ENCODE measurements at regions of chr2 and their contacts with region 1.

Region 1: GRCh38 chr2:100640431-100641124 is 77.8 kb downstream of the PDCL3 start:
- DNase-seq: no peak
- ATAC-seq: no peak
- H3K4me3 ChIP-seq: no peak overlapping the region
- H3K4me3 Mint-ChIP-seq: peak overlapping the region in 1 of 10 donors; percentile 1
- H3K27ac ChIP-seq: no peak overlapping the region
- H3K27ac Mint-ChIP-seq: peak overlapping the region in 2 of 9 donors; percentile 43 to 65
- H3K4me1 ChIP-seq: peaks cover 9 to 37% of the 10 kb centered on the region in 2 donors
- H3K4me1 Mint-ChIP-seq: peaks cover 25 to 57% (median 56%) of the 10 kb centered on the region in 7 donors
- H3K27me3 ChIP-seq: no peaks in the 10 kb centered on the region
- H3K27me3 Mint-ChIP-seq: peaks cover 0 to 31% (median 0%) of the 10 kb centered on the region in 5 donors

Region 2: GRCh38 chr2:100394111-100394641 is 246.4 kb before region 1 on chr2:
- CTCF ChIA-PET with region 1: no interaction called
- POLR2A ChIA-PET with region 1: no interaction called
- intact Hi-C with region 1: no loop called
- DNase-seq: no peak
- ATAC-seq: peak; percentile 45
- H3K4me3 ChIP-seq: no peak overlapping the region
- H3K4me3 Mint-ChIP-seq: no peak overlapping the region
- H3K27ac ChIP-seq: no peak overlapping the region
- H3K27ac Mint-ChIP-seq: no peak overlapping the region
- H3K4me1 ChIP-seq: no peaks in the 10 kb centered on the region
- H3K4me1 Mint-ChIP-seq: no peaks in the 10 kb centered on the region
- H3K27me3 ChIP-seq: no peaks in the 10 kb centered on the region
- H3K27me3 Mint-ChIP-seq: no peaks in the 10 kb centered on the region

Region 3: DNA sequence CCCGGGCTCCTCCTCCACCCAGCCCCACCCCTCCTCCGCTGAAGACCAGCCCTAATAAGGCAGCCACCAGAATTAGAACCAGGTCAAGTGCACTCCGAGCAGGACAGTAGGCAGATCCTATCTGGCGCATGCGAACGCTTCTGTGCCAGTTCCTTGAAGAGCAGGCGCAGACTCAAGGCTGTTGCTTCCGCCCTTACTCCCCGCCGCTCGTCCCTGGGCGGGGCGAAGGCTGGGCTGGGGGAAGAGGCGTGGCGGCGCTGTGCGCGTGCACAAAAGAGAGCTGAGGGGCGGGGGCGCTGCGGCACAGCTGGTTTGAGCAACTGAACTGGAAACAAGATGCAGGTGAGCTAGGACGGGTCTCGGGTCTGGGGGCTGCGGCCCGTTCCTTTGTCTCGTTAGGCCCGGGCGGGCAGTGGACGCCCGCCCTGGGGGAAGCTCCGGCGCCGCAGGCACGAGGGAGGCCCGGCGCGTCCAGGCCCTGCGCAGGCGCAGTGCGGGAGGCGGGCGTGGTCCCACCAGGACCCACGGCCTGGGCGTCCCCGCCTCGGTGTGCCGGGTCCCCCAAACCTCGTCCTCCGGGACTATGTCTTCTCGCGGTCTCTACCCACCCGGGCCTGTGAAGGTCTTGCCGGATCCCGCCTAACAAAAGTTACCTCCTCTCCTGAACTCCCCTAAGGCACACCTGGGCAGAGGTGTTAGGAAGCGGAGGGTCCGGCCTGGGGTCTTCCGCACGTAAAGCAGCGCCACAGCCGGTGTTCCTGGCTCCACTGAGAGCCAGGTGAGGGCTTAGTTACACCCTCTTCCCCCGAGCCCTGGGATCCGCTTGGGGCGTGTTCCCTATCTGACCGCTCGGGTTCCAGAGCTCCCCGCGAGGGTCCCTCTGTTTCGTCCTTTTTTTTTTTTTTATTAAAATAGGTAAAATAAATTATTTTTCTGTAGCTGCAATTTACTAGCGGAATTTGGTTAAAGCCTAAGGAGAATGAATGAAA is 77.6 kb before region 1 on chr2 and contains the start of gene PDCL3:
- CTCF ChIA-PET with region 1: no interaction called
- POLR2A ChIA-PET with region 1: no interaction called
- intact Hi-C with region 1: loop called in 1 of 2 experiments (anchors 5 kb)
- DNase-seq: peak; percentile 91 to 97 (median 96)
- ATAC-seq: peak; percentile 94
- H3K4me3 ChIP-seq: peak within 1 kb of the TSS; percentile 99
- H3K4me3 Mint-ChIP-seq: peak within 1 kb of the TSS; percentile 85 to 100 (median 97)
- H3K27ac ChIP-seq: peak within 1 kb of the TSS; percentile 78
- H3K27ac Mint-ChIP-seq: peak within 1 kb of the TSS; percentile 97 to 99 (median 99)
- H3K4me1 ChIP-seq: peaks cover 15 to 16% of the 10 kb centered on the region in 2 donors
- H3K4me1 Mint-ChIP-seq: peaks cover 14 to 64% (median 52%) of the 10 kb centered on the region in 7 donors
- H3K27me3 ChIP-seq: no peaks in the 10 kb centered on the region
- H3K27me3 Mint-ChIP-seq: peaks cover 0 to 2% (median 0%) of the 10 kb centered on the region in 5 donors
- total RNA-seq, gene PDCL3: 16.6 to 31.9 (median 19.9) TPM

Region 4: DNA sequence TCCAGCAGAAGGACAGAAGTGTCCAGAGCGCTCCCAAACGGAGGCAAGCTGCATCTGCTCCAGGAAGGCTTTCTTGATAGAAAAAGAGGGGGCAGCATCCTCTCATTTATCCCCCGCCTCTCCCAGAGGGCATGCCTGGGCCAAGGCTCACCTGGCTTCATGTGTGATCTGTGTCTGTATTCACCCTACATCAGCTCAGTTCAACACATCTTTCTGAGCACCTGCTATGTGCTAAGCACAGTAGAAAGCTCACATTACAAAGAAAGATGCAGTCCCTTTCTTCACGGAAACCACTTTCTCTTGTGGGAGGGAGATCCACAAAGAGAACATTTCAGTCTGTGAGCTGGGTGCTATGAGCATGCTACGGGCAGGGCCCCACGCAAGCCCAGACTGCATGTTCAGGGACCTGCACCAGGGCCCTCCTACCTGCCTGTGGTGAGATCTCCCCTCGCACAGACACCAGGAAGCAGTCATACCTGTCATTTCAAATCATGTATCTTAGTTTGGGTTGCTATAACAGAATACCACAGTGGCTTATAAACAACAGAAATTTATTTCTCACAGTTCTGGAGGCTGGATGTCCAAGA is 13.0 kb after region 1 on chr2:
- CTCF ChIA-PET with region 1: interaction called, 3 read pairs
- POLR2A ChIA-PET with region 1: interaction called, 11 read pairs
- intact Hi-C with region 1: loop called in 1 of 2 experiments (anchors 1 kb)
- DNase-seq: peak in 8 of 9 donors; percentile 37 to 90 (median 85)
- ATAC-seq: peak; percentile 95
- H3K4me3 ChIP-seq: no peak overlapping the region
- H3K4me3 Mint-ChIP-seq: peak overlapping the region in 9 of 10 donors; percentile 37 to 79 (median 67)
- H3K27ac ChIP-seq: peak overlapping the region; percentile 57
- H3K27ac Mint-ChIP-seq: peak overlapping the region; percentile 14 to 97 (median 92)
- H3K4me1 ChIP-seq: peaks cover 0 to 58% of the 10 kb centered on the region in 2 donors
- H3K4me1 Mint-ChIP-seq: peaks cover 13 to 76% (median 59%) of the 10 kb centered on the region in 7 donors
- H3K27me3 ChIP-seq: no peaks in the 10 kb centered on the region
- H3K27me3 Mint-ChIP-seq: no peaks in the 10 kb centered on the region

Region 5: GRCh38 chr2:100707016-100707947 is 66.7 kb after region 1 on chr2:
- CTCF ChIA-PET with region 1: no interaction called
- POLR2A ChIA-PET with region 1: interaction called, 4 read pairs
- intact Hi-C with region 1: loop called in 1 of 2 experiments (anchors 2 kb)
- DNase-seq: peak in 4 of 9 donors; percentile 1 to 21 (median 18)
- ATAC-seq: no peak
- H3K4me3 ChIP-seq: no peak overlapping the region
- H3K4me3 Mint-ChIP-seq: peak overlapping the region in 9 of 10 donors; percentile 40 to 70 (median 63)
- H3K27ac ChIP-seq: no peak overlapping the region
- H3K27ac Mint-ChIP-seq: peak overlapping the region in 7 of 9 donors; percentile 3 to 60 (median 31)
- H3K4me1 ChIP-seq: peaks cover 3 to 35% of the 10 kb centered on the region in 2 donors
- H3K4me1 Mint-ChIP-seq: peaks cover 14 to 66% (median 60%) of the 10 kb centered on the region in 7 donors
- H3K27me3 ChIP-seq: no peaks in the 10 kb centered on the region
- H3K27me3 Mint-ChIP-seq: no peaks in the 10 kb centered on the region

Region 6: GRCh38 chr2:101001691-101002561 is 361.3 kb after region 1 on chr2 and contains the start of gene RPL31:
- CTCF ChIA-PET with region 1: no interaction called
- POLR2A ChIA-PET with region 1: interaction called, 3 read pairs
- intact Hi-C with region 1: loop called in 1 of 2 experiments (anchors 1 kb)
- DNase-seq: peak; percentile 86 to 97 (median 95)
- ATAC-seq: peak; percentile 99
- H3K4me3 ChIP-seq: peak within 1 kb of the TSS; percentile 93
- H3K4me3 Mint-ChIP-seq: peak within 1 kb of the TSS; percentile 91 to 99 (median 95)
- H3K27ac ChIP-seq: peak within 1 kb of the TSS; percentile 86
- H3K27ac Mint-ChIP-seq: peak within 1 kb of the TSS; percentile 88 to 99 (median 98)
- H3K4me1 ChIP-seq: peaks cover 16 to 18% of the 10 kb centered on the region in 2 donors
- H3K4me1 Mint-ChIP-seq: peaks cover 32 to 48% (median 44%) of the 10 kb centered on the region in 7 donors
- H3K27me3 ChIP-seq: no peaks in the 10 kb centered on the region
- H3K27me3 Mint-ChIP-seq: peaks cover 0 to 5% (median 0%) of the 10 kb centered on the region in 5 donors
- total RNA-seq, gene RPL31: 1,182 to 2,835 (median 2,548) TPM